ENCODE measurements at regions of chr18 and their contacts with region 1.

Region 1: DNA sequence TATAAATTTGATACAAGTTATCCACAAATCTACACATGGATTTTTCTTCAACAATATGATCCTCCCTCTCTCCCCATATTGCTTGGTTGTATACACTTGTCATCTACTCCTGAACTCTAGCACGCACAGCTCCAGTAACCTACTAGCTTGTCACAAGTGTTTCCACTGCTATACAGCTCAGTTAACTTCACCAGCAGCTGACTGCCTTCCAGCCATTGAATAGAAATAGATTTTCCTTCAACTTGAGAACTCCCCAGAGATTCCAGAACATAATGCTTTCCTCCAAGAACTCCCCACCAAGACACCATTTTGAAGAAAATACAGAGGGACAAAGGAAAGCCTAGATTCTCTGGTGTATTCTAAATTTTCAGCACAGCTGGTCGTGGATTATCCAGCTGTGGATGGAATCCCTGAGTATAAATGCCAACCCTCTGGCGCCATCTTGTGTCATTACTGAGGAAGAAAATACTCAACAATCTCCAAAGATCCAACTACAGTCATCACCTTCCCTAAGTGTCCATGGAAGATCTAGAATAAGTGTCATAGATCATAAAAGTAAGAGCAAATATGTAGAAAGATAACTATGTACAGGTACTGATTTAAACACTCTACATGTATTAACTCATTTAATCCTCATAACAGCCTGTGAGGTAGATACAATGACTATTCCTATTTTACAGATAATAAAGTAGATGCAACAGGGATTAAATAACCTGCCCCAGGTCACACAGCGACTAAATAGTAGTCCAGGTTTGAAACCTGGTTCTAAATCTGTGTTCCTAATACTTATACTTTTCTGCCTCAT is 156.7 kb downstream of the ARHGAP28 start:
- DNase-seq: no peak
- H3K4me3 ChIP-seq: no peak overlapping the region
- H3K27ac ChIP-seq: no peak overlapping the region
- H3K4me1 ChIP-seq: peaks cover 0 to 5% (median 2%) of the 10 kb centered on the region in 4 experiments; a peak in 2 of 7 replicates
- H3K27me3 ChIP-seq: no peaks in the 10 kb centered on the region
- CTCF ChIP-seq: peak in 2 of 3 experiments; percentile 70 to 71; a peak in 3 of 4 replicates
- EP300 ChIP-seq: no peak
- POLR2A ChIP-seq: no peak
- RAD21 ChIP-seq: peak; percentile 96 to 97

Region 2: DNA sequence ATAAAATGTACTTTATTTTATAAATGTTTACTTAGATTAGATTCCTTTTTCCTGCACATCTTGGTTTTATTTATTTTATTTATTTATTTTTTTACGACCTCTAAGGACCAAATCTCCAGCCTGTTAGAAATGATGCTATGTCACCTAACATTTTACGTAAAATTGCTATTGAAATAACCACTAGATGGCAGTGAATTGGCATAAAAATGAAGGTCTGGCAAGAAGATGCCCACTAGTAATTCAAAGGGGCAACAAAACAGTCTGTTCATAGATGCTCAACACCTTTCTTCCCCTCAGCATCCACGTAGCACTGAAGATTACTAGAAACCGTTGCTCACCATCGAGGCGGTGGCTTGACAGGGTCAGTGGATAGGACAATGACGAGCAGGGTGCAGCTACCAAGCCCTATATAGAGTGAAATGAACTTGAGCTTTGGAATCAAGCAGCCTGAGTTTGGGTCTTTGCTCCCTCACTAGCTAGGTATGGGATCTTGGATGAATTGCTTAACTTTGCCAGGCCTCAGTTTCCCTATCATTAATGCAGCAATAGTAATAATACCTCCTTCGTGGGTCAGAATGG is 342.8 kb before region 1 on chr18:
- CTCF ChIA-PET with region 1: interaction called, 73 read pairs
- POLR2A ChIA-PET with region 1: no interaction called
- DNase-seq: no peak
- H3K4me3 ChIP-seq: no peak overlapping the region
- H3K27ac ChIP-seq: no peak overlapping the region
- H3K4me1 ChIP-seq: peaks cover 0 to 3% (median 1%) of the 10 kb centered on the region in 4 experiments; a peak in 1 of 7 replicates
- H3K27me3 ChIP-seq: no peaks in the 10 kb centered on the region
- CTCF ChIP-seq: peak in 2 of 3 experiments; percentile 46 to 54; a peak in 3 of 4 replicates
- EP300 ChIP-seq: no peak
- POLR2A ChIP-seq: no peak
- RAD21 ChIP-seq: peak; percentile 80 to 83

Measured in H1 (cell line).